B cell (primary cell): ENCODE measurements at regions of chr11 and their contacts with region 1.

Region 1: GRCh38 chr11:2420502-2421225 is 20.1 kb downstream of the TSSC4 start:
- DNase-seq: peak; percentile 86
- ATAC-seq: peak; percentile 95
- H3K4me3 ChIP-seq: no peak overlapping the region
- H3K4me3 Mint-ChIP-seq: no peak overlapping the region
- H3K27ac ChIP-seq: no peak overlapping the region
- H3K27ac Mint-ChIP-seq: peak overlapping the region; percentile 3
- H3K4me1 ChIP-seq: peaks cover 5 to 15% of the 10 kb centered on the region in 2 donors
- H3K4me1 Mint-ChIP-seq: peaks cover 3% of the 10 kb centered on the region
- H3K27me3 ChIP-seq: peaks cover 0 to 3% (median 0%) of the 10 kb centered on the region in 4 experiments
- H3K27me3 Mint-ChIP-seq: no peaks in the 10 kb centered on the region
- CTCF ChIP-seq: peak; percentile 83

Region 2: GRCh38 chr11:1714973-1715885 is 705.4 kb before region 1 on chr11:
- CTCF ChIA-PET with region 1: no interaction called
- POLR2A ChIA-PET with region 1: no interaction called
- intact Hi-C with region 1: no loop called
- DNase-seq: no peak
- ATAC-seq: no peak
- H3K4me3 ChIP-seq: no peak overlapping the region
- H3K4me3 Mint-ChIP-seq: no peak overlapping the region
- H3K27ac ChIP-seq: no peak overlapping the region
- H3K27ac Mint-ChIP-seq: no peak overlapping the region
- H3K4me1 ChIP-seq: no peaks in the 10 kb centered on the region
- H3K4me1 Mint-ChIP-seq: no peaks in the 10 kb centered on the region
- H3K27me3 ChIP-seq: no peaks in the 10 kb centered on the region
- H3K27me3 Mint-ChIP-seq: peaks cover 13% of the 10 kb centered on the region
- CTCF ChIP-seq: no peak

Region 3: DNA sequence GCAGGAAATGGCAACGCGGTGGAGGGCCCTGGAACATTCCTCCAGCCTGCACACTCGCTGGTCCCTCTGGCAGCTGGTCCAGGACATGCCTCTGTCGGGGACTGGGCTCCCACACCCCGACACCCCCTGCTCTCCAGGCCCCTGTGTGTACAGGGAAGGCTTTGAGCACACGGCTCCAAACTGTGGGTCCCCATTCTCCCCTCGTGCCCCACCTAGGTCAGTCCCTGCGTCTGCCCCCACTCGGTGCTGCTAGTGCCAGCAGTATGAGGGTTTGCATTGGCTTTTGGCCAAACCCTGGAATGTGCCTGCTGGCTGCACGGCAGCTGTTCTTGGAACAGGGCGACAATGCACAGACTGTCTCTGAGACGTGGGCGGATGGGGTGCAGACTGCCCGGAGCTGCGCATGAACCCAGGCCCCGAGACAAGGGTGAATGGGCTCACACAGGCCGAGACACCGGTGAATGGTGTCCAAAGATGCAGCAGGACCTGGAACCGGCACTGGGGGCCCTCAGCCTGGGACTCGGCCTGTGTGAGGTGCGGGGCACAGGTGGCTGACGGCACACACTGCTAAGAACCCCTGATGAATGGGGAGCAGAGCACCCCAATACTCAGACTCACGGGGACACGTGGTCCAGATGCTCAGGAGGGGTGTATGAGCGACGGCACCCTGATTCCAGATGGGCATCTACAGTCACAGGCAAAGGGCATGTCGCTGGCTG is 593.4 kb before region 1 on chr11:
- CTCF ChIA-PET with region 1: no interaction called
- POLR2A ChIA-PET with region 1: no interaction called
- intact Hi-C with region 1: no loop called
- DNase-seq: no peak
- ATAC-seq: no peak
- H3K4me3 ChIP-seq: no peak overlapping the region
- H3K4me3 Mint-ChIP-seq: no peak overlapping the region
- H3K27ac ChIP-seq: no peak overlapping the region
- H3K27ac Mint-ChIP-seq: no peak overlapping the region
- H3K4me1 ChIP-seq: peaks cover 0 to under 1% of the 10 kb centered on the region in 2 donors
- H3K4me1 Mint-ChIP-seq: peaks cover 2% of the 10 kb centered on the region
- H3K27me3 ChIP-seq: peaks cover 0 to 12% (median 0%) of the 10 kb centered on the region in 4 experiments
- H3K27me3 Mint-ChIP-seq: peaks cover 18% of the 10 kb centered on the region
- CTCF ChIP-seq: no peak

Region 4: GRCh38 chr11:1873048-1873812 is 547.4 kb before region 1 on chr11:
- CTCF ChIA-PET with region 1: no interaction called
- POLR2A ChIA-PET with region 1: no interaction called
- intact Hi-C with region 1: no loop called
- DNase-seq: no peak
- ATAC-seq: no peak
- H3K4me3 ChIP-seq: no peak overlapping the region
- H3K4me3 Mint-ChIP-seq: no peak overlapping the region
- H3K27ac ChIP-seq: peak overlapping the region in 1 of 2 donors; percentile 62
- H3K27ac Mint-ChIP-seq: peak overlapping the region; percentile 59
- H3K4me1 ChIP-seq: peaks cover 34 to 85% of the 10 kb centered on the region in 2 donors
- H3K4me1 Mint-ChIP-seq: peaks cover 61% of the 10 kb centered on the region
- H3K27me3 ChIP-seq: no peaks in the 10 kb centered on the region
- H3K27me3 Mint-ChIP-seq: no peaks in the 10 kb centered on the region
- CTCF ChIP-seq: no peak

Region 5: DNA sequence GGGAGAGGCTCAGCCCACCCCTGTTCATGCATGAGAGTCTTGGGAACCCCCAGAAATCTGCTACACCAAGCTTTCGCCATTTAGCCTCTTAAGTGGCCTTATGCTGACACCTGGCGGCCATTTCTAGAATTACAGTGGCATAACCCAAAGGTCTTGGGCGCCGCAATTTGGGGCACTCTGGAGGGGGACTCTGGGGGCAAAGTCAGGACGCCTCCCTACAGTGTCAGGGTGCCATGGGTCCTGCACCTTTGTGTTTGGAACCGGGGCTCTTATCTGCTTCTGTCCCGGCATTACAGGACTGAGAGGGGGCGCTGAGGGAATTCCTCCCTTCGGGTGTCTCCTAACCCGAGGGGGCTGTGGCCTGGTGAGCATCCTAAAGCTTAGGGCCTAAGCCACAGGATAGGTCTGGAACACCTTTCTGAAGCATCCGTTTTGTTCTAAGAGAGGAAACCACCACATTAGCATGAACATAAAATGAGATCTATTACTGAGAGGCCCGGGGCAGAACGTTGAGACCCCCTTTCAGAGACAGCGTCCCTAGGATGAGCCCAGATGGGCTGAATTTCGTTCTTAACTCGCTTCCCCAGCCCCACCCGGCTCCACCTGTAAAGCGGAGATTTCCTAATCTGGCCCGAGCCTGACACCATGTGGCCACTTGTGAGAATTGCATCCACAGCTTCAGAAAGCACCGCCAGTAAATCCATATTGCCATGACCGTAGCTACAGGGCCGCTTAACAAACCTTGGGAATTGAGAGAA is 269.0 kb before region 1 on chr11:
- CTCF ChIA-PET with region 1: interaction called, 17 read pairs
- POLR2A ChIA-PET with region 1: no interaction called
- intact Hi-C with region 1: no loop called
- DNase-seq: peak; percentile 88
- ATAC-seq: peak; percentile 84
- H3K4me3 ChIP-seq: peak overlapping the region in 2 of 5 experiments; percentile 9 to 14
- H3K4me3 Mint-ChIP-seq: peak overlapping the region; percentile 52
- H3K27ac ChIP-seq: no peak overlapping the region
- H3K27ac Mint-ChIP-seq: peak overlapping the region; percentile 46
- H3K4me1 ChIP-seq: peaks cover 5 to 9% of the 10 kb centered on the region in 2 donors
- H3K4me1 Mint-ChIP-seq: peaks cover 10% of the 10 kb centered on the region
- H3K27me3 ChIP-seq: peaks cover 0 to 34% (median 17%) of the 10 kb centered on the region in 4 experiments
- H3K27me3 Mint-ChIP-seq: peaks cover 35% of the 10 kb centered on the region
- CTCF ChIP-seq: peak; percentile 77

Region 6: DNA sequence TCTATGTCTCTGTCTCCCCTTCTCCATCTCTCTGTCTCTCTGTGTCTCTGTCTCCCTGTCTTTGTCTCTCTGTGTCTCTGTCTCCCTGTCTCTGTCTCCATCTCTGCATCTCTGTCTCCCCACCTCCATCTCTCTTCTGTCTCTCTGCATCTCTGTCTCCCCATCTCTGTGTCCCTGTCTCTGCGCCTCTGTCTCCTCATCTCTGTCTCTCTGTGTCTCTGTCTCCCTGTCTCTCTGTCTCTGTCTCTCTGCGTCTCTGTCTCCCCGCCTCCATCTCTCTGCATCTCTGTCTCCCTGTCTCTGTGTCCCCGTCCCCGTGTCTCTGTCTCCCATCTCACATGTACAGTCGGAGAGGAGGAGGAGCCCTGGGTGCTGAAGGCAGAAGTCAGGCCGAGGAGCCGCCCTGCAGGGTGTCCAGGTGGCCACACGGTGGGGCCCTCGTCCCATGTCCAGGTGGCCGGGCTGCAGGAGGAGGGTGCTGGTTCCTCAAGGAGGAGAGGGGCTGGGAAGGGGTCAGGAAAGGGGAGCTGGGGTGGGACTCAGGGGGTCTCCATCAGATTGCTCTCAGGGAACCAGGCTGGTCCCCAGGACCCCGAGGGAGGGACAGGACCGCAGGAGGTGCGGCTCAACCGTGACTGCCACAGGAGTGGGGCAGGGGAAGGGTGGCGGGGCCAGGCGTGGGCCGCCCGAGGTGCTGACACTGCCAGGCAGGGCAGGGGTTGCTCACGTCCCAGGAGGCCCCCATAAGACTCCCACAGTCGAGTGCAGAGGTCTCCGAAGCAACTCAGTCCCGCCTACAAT is 223.5 kb before region 1 on chr11:
- CTCF ChIA-PET with region 1: interaction called, 95 read pairs
- POLR2A ChIA-PET with region 1: no interaction called
- intact Hi-C with region 1: no loop called
- DNase-seq: peak; percentile 79
- ATAC-seq: peak; percentile 92
- H3K4me3 ChIP-seq: no peak overlapping the region
- H3K4me3 Mint-ChIP-seq: no peak overlapping the region
- H3K27ac ChIP-seq: no peak overlapping the region
- H3K27ac Mint-ChIP-seq: peak overlapping the region; percentile 34
- H3K4me1 ChIP-seq: peaks cover 0 to 18% of the 10 kb centered on the region in 2 donors
- H3K4me1 Mint-ChIP-seq: peaks cover 7% of the 10 kb centered on the region
- H3K27me3 ChIP-seq: peaks cover 0 to 11% (median 2%) of the 10 kb centered on the region in 4 experiments
- H3K27me3 Mint-ChIP-seq: peaks cover 14% of the 10 kb centered on the region
- CTCF ChIP-seq: peak; percentile 78

Region 7: DNA sequence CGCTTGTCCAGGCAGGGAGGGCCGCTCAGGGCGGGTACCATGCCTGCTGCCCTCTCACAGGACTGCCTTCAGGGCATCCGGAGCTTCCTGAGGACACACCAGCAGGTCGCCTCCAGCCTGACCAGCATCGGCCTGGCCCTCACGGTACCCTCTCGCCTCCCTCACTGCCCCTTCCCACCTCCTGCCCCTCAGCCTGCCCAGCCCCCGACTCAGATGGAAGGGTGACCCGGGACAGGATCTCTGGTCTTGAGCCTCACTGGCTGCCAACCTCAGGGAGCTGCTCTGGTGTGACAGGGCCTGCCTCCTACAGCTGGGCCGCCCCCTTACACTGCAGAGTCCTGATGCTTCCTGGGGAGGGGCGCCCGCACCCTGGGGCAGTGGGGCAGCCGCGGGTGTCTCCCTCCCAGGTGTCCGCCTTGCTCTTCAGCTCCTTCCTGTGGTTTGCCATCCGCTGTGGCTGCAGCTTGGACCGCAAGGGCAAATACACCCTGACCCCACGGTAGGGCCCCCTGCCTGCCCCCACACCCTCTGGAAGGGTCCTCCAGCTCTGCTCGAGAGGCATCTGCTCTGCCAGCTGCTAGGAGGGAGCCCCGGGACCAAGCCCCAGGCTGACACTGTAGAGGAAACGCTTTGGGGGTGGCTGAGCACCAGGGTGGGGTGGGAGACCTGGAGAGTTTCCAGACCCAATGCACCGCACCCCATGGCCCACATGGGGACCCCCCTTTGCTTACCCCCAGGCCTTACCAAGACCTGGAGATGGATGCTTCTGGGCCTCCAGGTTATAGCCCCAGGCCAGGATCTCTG is 104.3 kb before region 1 on chr11:
- CTCF ChIA-PET with region 1: interaction called, 583 read pairs
- POLR2A ChIA-PET with region 1: no interaction called
- intact Hi-C with region 1: no loop called
- DNase-seq: no peak
- ATAC-seq: no peak
- H3K4me3 ChIP-seq: no peak overlapping the region
- H3K4me3 Mint-ChIP-seq: no peak overlapping the region
- H3K27ac ChIP-seq: no peak overlapping the region
- H3K27ac Mint-ChIP-seq: no peak overlapping the region
- H3K4me1 ChIP-seq: peaks cover 0 to 13% of the 10 kb centered on the region in 2 donors
- H3K4me1 Mint-ChIP-seq: no peaks in the 10 kb centered on the region
- H3K27me3 ChIP-seq: peaks cover 0 to under 1% (median 0%) of the 10 kb centered on the region in 4 experiments
- H3K27me3 Mint-ChIP-seq: no peaks in the 10 kb centered on the region
- CTCF ChIP-seq: no peak

Region 8: DNA sequence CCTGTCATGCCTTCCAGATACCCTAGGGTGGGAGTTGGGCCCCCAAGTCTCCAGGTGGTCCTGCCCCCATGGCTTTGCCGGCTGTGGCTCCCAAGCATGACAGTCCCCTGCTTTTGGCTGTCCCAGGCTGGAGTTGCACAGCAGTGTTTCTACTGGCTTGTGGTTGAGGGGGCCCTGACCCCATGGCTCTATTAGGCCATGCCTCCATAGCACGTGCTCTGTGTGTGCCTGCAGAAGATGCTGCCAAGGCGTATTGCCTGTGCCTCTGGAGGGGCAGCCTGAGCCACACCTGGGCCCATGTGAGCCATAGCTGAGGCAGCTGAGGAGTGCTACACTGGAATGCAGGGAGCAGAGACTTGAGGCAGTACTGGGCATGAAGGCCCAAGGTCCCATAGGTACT is 69.0 kb before region 1 on chr11:
- CTCF ChIA-PET with region 1: no interaction called
- POLR2A ChIA-PET with region 1: no interaction called
- intact Hi-C with region 1: no loop called
- DNase-seq: no peak
- ATAC-seq: no peak
- H3K4me3 ChIP-seq: no peak overlapping the region
- H3K4me3 Mint-ChIP-seq: no peak overlapping the region
- H3K27ac ChIP-seq: no peak overlapping the region
- H3K27ac Mint-ChIP-seq: no peak overlapping the region
- H3K4me1 ChIP-seq: no peaks in the 10 kb centered on the region
- H3K4me1 Mint-ChIP-seq: no peaks in the 10 kb centered on the region
- H3K27me3 ChIP-seq: no peaks in the 10 kb centered on the region
- H3K27me3 Mint-ChIP-seq: no peaks in the 10 kb centered on the region
- CTCF ChIP-seq: no peak

Region 9: DNA sequence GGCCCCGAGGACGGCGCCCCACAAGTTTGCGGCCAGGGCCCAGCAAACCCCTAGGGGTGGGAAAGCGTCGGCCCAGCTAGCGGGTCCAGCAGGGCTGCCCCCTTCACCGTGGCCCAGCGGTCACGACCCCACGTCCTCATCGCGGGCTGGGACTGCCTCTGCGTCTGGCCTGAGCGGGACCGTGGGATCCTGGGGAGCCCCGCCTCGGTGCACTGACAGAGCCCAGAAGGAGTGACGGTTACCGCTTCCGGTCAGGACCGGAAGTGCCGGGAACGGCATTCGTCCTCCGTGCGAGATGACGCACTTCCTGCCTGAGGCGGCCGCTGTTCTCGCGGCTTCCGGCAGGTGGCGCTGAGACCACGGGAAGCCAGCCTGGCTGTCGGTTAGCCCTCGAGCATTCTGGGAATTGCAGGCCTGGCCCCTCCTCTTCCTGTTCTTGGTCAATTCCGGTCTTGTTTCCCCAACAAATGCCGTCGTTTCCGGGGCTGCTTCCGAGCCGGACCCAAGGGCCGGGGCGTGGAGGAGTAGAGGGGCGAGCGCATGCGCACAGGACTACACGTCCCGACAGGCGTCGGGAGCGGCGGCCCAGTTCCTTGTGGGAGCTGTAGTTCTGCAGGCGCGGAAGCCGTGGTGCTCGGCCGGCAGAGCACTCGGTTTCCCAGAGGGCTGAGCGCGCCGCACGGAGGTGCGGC is 20.4 kb before region 1 on chr11 and contains the start of gene TSSC4:
- CTCF ChIA-PET with region 1: interaction called, 38 read pairs
- POLR2A ChIA-PET with region 1: interaction called, 3 read pairs
- intact Hi-C with region 1: loop called (anchors 1 kb)
- DNase-seq: peak; percentile 100
- ATAC-seq: peak; percentile 81
- H3K4me3 ChIP-seq: peak within 1 kb of the TSS; percentile 87 to 100 (median 95)
- H3K4me3 Mint-ChIP-seq: peak within 1 kb of the TSS; percentile 90
- H3K27ac ChIP-seq: peak within 1 kb of the TSS; percentile 91 to 93
- H3K27ac Mint-ChIP-seq: peak within 1 kb of the TSS; percentile 98
- H3K4me1 ChIP-seq: peaks cover 26 to 40% of the 10 kb centered on the region in 2 donors
- H3K4me1 Mint-ChIP-seq: peaks cover 25% of the 10 kb centered on the region
- H3K27me3 ChIP-seq: no peaks in the 10 kb centered on the region
- H3K27me3 Mint-ChIP-seq: no peaks in the 10 kb centered on the region
- CTCF ChIP-seq: peak; percentile 94
- total RNA-seq, gene TSSC4: 57.5 and 59.5 TPM in 2 replicates

Region 10: GRCh38 chr11:2532704-2533586 is 112.3 kb after region 1 on chr11:
- CTCF ChIA-PET with region 1: interaction called, 217 read pairs
- POLR2A ChIA-PET with region 1: interaction called, 3 read pairs
- intact Hi-C with region 1: no loop called
- DNase-seq: peak; percentile 93
- ATAC-seq: peak; percentile 89
- H3K4me3 ChIP-seq: peak overlapping the region in 2 of 5 experiments; percentile 9 to 19
- H3K4me3 Mint-ChIP-seq: peak overlapping the region; percentile 85
- H3K27ac ChIP-seq: no peak overlapping the region
- H3K27ac Mint-ChIP-seq: no peak overlapping the region
- H3K4me1 ChIP-seq: peaks cover 19 to 23% of the 10 kb centered on the region in 2 donors
- H3K4me1 Mint-ChIP-seq: peaks cover 22% of the 10 kb centered on the region
- H3K27me3 ChIP-seq: peaks cover 0 to 14% (median 0%) of the 10 kb centered on the region in 4 experiments
- H3K27me3 Mint-ChIP-seq: no peaks in the 10 kb centered on the region
- CTCF ChIP-seq: peak; percentile 99